ENCODE measurements at regions of chr6 and their contacts with region 1.

Region 1: GRCh38 chr6:109482905-109483735 is at the start of gene ZBTB24:
- DNase-seq: peak; percentile 88
- H3K4me3 Mint-ChIP-seq: peak within 1 kb of the TSS; percentile 95
- H3K27ac Mint-ChIP-seq: peak within 1 kb of the TSS; percentile 88
- H3K4me1 Mint-ChIP-seq: peaks cover 50% of the 10 kb centered on the region
- H3K27me3 Mint-ChIP-seq: no peaks in the 10 kb centered on the region
- total RNA-seq, gene ZBTB24: 17.7 and 18.8 TPM in 2 replicates

Region 2: DNA sequence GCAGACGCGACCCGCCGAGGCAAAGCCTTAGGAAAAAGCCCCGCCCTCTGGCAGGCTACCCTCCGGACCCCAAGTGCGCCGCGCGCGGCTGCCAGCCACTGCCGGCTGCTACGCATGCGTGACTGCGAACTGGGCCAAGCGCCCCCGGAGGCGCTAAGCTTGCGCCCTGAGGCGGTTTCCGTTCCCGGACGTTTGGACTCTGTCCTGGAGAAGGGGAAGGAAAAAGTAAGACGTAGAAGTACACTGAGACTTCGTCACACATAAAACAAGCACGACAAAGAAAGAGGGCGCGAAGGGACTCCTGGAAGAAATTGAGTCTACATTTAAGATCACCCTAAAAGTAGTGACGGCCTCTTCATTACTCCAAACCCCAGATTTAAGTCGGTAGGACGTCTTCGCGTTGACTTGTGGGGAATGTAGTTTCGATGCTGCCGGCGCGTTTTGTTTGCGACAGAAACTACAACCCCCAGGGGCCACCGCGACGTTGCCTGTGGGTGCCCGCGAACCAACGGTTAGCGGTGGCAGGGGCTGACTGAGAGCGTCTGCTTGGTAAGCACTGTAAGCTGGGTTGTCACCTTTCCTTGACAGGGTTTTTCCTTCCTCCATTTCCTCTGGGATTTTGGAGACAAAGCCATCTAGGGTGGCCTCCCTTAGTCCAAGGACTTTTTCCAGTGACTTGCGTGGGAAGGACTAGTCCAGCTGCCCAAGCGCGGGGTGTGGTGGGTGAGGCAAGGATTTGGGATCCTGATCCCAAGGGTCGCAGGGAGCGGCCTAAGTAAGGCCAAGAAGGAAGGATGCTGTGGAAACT is 387.9 kb before region 1 on chr6 and contains the start of gene CEP57L1:
- intact Hi-C with region 1: loop called (anchors 2 kb)
- DNase-seq: peak; percentile 92
- H3K4me3 Mint-ChIP-seq: peak within 1 kb of the TSS; percentile 93
- H3K27ac Mint-ChIP-seq: peak within 1 kb of the TSS; percentile 99
- H3K4me1 Mint-ChIP-seq: peaks cover 45% of the 10 kb centered on the region
- H3K27me3 Mint-ChIP-seq: no peaks in the 10 kb centered on the region
- total RNA-seq, gene CEP57L1: 18.2 and 25.4 TPM in 2 replicates

Region 3: DNA sequence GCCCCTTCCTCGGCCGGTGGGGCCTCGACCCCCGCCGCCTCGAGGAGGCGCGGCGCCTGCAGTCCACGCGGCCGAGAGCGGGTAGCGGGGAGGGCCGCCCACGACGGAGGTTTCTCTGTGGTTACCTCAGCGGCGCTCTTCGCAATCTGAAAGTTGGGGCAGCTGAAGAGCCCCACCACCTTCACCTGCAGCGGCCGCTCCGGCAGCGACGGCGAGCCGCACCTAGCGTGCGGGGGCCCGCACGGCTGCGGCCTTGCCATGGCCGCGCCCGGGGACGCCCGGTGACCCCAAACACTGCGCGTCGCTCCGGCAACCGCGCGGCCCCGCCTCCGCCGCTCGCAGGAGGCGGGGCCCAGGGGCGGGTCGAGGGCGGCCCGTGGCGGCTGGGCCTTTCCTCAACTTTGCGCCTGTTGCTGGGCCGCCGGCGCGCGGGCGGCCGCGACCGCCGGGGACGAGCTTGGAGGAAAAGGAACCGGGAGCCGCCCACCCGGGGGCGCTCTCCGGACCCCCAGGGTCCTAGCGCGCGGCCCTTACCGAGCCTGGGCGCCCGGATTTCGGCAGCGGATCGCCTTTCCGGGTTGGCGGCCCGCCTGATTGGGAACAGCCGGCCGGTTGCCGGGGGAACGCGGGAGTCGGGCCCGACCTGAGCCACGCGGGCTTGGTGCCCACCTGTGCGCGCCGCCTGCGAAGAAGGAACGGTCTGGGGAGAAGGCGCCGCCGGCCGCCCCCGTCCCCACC is 42.6 kb before region 1 on chr6 and contains the starts of genes PPIL6 and SMPD2:
- intact Hi-C with region 1: loop called (anchors 5 kb)
- DNase-seq: peak; percentile 72
- H3K4me3 Mint-ChIP-seq: peak within 1 kb of the TSS; percentile 92
- H3K27ac Mint-ChIP-seq: peak within 1 kb of the TSS; percentile 92
- H3K4me1 Mint-ChIP-seq: peaks cover 17% of the 10 kb centered on the region
- H3K27me3 Mint-ChIP-seq: no peaks in the 10 kb centered on the region
- total RNA-seq, gene PPIL6: 0.32 TPM in 1 of 2 replicates, not detected in the other
- total RNA-seq, gene SMPD2: 14.7 and 17.5 TPM in 2 replicates

Region 4: DNA sequence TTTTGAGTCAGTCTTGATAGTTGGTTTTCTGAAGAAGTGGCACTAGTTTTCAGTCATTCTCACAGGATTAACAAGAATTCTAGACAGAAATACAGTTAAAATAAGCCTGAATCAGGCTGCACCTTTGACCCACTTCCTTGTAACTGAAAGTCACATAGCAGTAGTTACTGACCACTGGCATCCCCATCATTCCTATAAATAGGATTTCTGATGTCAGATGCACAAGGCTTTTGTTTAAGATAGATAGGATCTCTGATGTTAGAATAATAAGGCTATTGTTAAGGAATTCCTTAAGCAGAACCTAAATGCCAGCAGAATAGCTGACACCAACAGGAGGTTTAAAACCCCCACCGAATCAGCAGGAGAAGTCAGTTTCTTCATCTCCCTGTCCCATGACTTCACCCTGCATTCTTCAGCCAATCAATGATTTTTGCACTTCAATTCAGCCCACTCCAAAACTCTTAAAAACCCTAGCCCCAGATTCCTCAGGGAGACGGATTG is 30.5 kb after region 1 on chr6:
- intact Hi-C with region 1: loop called (anchors 5 kb)
- DNase-seq: no peak
- H3K4me3 Mint-ChIP-seq: no peak overlapping the region
- H3K27ac Mint-ChIP-seq: peak overlapping the region; percentile 71
- H3K4me1 Mint-ChIP-seq: peaks cover 41% of the 10 kb centered on the region
- H3K27me3 Mint-ChIP-seq: no peaks in the 10 kb centered on the region

Region 5: GRCh38 chr6:109610590-109610989 is 127.5 kb after region 1 on chr6:
- intact Hi-C with region 1: no loop called
- DNase-seq: no peak
- H3K4me3 Mint-ChIP-seq: no peak overlapping the region
- H3K27ac Mint-ChIP-seq: no peak overlapping the region
- H3K4me1 Mint-ChIP-seq: peaks cover 9% of the 10 kb centered on the region
- H3K27me3 Mint-ChIP-seq: no peaks in the 10 kb centered on the region

Region 6: DNA sequence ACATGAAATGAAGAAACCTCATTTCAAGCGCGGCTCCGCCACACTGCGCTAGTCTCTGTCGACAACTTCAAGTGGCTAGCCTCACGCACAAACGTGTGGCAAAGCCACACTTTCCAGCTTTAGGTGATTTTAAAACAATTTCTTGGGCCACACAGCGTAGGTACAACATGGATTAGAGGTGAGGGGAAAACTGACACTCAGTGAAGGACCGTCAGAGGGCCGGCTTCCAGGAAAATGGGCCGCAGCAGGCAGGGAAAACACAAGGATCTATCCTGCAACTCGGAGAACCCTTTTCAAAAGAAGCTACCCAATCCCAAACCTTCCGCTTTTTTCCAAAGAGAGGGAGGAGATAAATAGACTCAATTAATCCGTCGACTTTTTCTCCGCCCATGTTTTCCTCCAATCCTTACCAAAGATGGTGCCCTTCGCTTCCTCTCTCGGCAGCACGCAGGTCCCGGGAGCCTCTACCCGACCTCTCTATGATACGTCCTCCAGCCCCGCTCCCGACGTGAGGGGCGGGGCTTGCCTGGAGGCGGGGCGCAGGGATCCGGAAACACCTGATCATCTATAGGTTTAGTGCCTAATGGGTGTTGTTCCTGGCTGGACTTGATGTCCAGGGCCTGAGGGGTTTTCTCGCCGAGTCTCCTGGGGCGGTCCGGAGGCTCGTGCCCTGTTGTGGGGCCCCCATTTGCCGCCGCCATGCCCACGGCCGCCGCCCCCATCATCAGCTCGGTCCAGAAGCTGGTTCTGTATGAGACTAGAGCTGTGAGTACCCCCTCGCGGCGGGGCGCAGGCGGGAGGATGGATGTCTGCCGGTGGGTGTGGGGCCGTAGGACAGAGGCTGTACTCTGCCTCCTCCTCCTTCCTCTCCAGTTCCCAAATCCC is 207.9 kb after region 1 on chr6 and contains the starts of genes AK9 and FIG4:
- intact Hi-C with region 1: loop called (anchors 2 kb)
- DNase-seq: peak; percentile 84
- H3K4me3 Mint-ChIP-seq: peak within 1 kb of the TSS; percentile 96
- H3K27ac Mint-ChIP-seq: peak within 1 kb of the TSS; percentile 86
- H3K4me1 Mint-ChIP-seq: peaks cover 26% of the 10 kb centered on the region
- H3K27me3 Mint-ChIP-seq: peaks cover 10% of the 10 kb centered on the region
- total RNA-seq, gene AK9: 3.1 and 3.8 TPM in 2 replicates
- total RNA-seq, gene FIG4: 8.8 and 9.5 TPM in 2 replicates